Mammary epithelial cell (primary cell): ENCODE measurements at regions of chr5 and their contacts with region 1.

Region 1: DNA sequence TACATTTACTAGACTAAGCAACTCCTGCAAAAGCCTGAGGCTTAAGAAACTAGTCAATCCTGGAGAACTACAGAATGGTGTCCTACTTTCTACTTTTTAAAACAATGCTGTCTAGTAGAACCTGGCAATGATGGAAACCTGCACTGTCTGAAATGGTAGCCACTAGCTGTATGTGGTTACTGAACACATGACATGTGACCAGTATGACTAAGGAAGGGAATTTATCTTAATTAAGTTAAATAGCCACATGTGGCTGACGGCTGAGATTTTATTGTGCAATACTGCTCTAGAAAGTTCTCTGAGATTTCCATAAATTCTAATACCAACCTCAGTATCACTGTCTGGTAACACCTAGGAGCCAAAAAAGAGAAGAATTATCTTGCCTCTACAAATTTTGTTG is 44.9 kb upstream of the RAPGEF6 start:
- DNase-seq: peak; percentile 73
- H3K4me3 ChIP-seq: no peak overlapping the region
- H3K27ac ChIP-seq: no peak overlapping the region
- H3K4me1 ChIP-seq: peaks cover 7% of the 10 kb centered on the region
- H3K27me3 ChIP-seq: no peaks in the 10 kb centered on the region
- CTCF ChIP-seq: no peak

Region 2: DNA sequence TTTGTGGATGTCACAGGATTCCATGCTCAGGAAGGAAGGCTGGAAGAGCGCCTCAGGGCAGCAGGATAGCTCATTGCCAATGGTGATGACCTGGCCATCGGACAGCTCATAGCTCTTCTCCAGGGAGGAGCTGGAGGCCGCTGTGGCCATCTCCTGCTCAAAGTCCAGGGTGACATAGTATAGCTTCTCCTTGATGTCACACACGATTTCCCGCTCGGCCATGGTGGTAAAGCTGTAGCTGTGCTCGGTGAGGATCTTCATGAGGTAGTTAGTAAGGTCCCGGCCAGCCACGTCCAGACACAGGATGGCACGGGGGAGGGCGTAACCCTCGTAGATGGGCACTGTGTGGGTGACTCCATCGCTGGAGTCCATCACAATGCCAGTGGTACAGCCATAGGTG is 20.6 kb before region 1 on chr5:
- CTCF ChIA-PET with region 1: interaction called, 27 read pairs
- dilution Hi-C with region 1: no loop called
- in situ Hi-C with region 1: no loop called
- intact Hi-C with region 1: no loop called
- DNase-seq: no peak
- H3K4me3 ChIP-seq: no peak overlapping the region
- H3K27ac ChIP-seq: no peak overlapping the region
- H3K4me1 ChIP-seq: peaks cover 6% of the 10 kb centered on the region
- H3K27me3 ChIP-seq: no peaks in the 10 kb centered on the region
- CTCF ChIP-seq: no peak

Region 3: GRCh38 chr5:132238169-132238744 is 558.3 kb after region 1 on chr5:
- CTCF ChIA-PET with region 1: no interaction called
- dilution Hi-C with region 1: no loop called
- in situ Hi-C with region 1: no loop called
- intact Hi-C with region 1: no loop called
- DNase-seq: peak; percentile 50
- H3K4me3 ChIP-seq: no peak overlapping the region
- H3K27ac ChIP-seq: no peak overlapping the region
- H3K4me1 ChIP-seq: peaks cover 12% of the 10 kb centered on the region
- H3K27me3 ChIP-seq: no peaks in the 10 kb centered on the region
- CTCF ChIP-seq: peak; percentile 76 to 89